Activated naive CD4-positive, alpha-beta T cell treated with anti-CD3 and anti-CD28 coated beads for 36 hours (primary cell): ENCODE measurements at regions of chr10 and their contacts with region 1.

Region 1: DNA sequence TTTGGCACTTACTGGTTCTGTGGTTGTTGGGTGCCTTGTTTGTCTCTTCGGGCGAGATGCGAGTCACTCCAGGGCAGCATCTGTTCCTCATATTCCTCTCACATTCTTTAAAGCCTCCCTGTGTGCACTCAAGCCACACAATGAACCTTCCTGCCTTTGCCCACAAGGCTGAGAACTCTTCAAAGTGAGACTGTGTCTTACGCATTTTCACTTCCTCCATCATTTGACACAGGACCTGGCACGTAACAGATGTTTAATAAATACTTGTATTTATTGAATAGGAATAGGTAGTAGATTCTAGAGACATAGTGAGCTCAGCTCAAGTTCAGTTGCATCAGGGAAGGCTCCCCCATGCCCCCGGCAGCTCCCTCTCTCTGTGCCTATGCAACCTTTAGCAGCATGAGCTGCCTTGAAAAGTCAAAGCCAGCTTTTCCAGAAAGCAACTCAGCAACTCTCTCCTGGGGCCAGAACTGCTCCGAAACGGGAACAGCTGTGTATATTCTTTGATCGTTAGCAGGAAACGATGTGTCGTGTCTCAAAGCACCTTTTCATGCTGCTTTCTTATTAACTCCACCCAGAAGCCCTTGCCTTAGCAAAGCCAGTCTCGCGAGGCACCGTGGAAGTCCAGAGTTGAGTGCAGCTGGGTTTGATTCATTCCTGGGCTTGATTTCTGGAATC is 97.5 kb downstream of the PFKFB3 start:
- DNase-seq: peak; percentile 79
- H3K4me3 Mint-ChIP-seq: peak overlapping the region; percentile 35
- H3K27ac Mint-ChIP-seq: peak overlapping the region; percentile 91
- H3K4me1 Mint-ChIP-seq: peaks cover 51% of the 10 kb centered on the region
- H3K27me3 Mint-ChIP-seq: no peaks in the 10 kb centered on the region

Region 2: DNA sequence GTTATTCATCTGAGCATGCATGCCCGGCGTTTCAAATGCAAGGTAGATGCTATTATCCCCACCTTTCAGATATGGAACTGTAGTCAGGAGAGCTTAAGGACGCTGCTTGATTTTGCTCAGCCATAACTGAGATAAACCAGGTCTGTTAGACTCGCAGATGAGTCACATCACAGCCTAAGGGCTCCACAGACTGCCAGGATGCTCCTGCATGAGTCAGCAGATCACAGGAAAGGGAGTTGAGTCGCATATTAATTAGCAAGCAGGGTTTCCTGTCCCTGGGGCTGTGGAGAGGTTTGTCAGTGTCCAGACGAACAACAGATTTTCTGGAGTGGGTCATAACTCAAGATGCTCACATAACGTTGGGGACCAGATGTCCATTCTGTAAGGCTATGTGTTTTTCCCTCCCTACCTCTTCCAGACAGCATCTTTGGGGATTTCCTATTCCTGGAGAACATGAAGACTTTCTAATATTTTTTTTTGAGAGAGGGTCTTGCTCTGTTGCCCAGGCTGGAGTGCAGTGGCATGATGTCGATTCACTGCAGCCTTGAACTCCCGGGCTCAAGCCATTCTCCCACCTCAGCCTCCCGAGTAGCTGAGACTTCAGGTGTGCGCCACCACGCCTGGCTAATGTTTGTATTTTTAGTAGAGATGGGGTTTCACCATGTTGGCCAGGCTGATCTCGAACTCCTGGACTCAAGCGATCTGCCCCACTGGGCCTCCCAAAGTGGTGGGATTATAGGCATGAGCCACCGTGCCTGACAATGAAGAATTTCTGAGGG is 60.8 kb before region 1 on chr10:
- CTCF ChIA-PET with region 1: no interaction called
- intact Hi-C with region 1: loop called (anchors 2 kb)
- DNase-seq: peak; percentile 90
- H3K4me3 Mint-ChIP-seq: no peak overlapping the region
- H3K27ac Mint-ChIP-seq: peak overlapping the region; percentile 60
- H3K4me1 Mint-ChIP-seq: peaks cover 23% of the 10 kb centered on the region
- H3K27me3 Mint-ChIP-seq: no peaks in the 10 kb centered on the region

Region 3: DNA sequence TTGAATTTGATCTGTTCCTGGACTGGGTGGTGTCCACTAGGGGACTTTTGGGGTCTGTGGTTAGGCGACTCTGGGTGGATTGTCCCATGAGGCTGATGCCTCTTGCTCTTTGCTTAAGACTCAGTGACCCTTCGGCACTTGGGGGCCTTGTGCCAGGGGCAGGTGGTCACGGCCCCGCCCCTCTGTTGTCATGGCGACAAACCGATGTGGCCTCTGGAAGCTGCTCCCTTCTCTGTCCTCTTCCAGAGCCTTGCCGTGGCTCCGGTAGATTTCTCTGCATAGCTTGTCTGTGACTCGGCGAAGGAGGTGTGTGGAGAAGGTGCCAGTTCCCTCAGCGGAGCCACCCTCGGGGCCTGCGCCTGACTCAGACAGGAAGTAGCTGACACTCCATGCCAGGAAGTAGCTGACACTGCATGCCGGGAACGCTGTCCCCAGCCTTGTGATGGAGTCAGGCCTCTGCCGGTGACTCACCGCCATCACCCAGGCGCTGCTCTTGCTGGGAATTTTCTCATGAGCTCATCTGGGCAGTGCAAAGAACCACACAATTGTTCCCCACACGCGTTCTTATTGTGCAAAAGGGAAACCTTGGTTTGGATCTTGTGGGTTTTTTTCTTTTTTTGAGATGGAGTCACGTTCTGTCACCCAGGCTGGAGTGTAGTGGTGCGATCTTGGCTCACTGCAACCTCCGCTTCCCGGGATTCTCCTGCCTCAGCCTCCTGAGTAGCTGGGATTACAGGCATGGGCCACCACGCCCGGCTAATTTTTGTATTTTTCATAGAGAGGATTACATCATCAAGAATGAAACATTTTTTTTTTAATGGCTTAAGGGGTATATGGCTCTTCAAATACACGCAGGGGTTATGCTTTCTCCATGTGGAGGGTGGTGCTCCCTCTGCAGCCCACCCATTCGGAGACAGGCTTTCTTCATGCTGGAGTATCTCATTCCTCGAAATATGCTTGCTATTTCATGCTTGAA is 24.9 kb before region 1 on chr10:
- CTCF ChIA-PET with region 1: interaction called, 4 read pairs
- intact Hi-C with region 1: loop called (anchors 1 kb)
- DNase-seq: peak; percentile 98
- H3K4me3 Mint-ChIP-seq: peak overlapping the region; percentile 60
- H3K27ac Mint-ChIP-seq: peak overlapping the region; percentile 94
- H3K4me1 Mint-ChIP-seq: peaks cover 50% of the 10 kb centered on the region
- H3K27me3 Mint-ChIP-seq: no peaks in the 10 kb centered on the region